ENCODE measurements at regions of chr14 and their contacts with region 1.

Region 1: GRCh38 chr14:106657460-106657859 is 1131.1 kb downstream of the TMEM121 start:
- DNase-seq: peak; percentile 78
- ATAC-seq: peak; percentile 78
- H3K4me3 Mint-ChIP-seq: no peak overlapping the region
- H3K27ac Mint-ChIP-seq: no peak overlapping the region
- H3K4me1 Mint-ChIP-seq: peaks cover 18% of the 10 kb centered on the region
- H3K27me3 Mint-ChIP-seq: no peaks in the 10 kb centered on the region

Region 2: GRCh38 chr14:106109337-106109736 is 548.1 kb before region 1 on chr14:
- CTCF ChIA-PET with region 1: no interaction called
- POLR2A ChIA-PET with region 1: no interaction called
- intact Hi-C with region 1: no loop called
- DNase-seq: no peak
- ATAC-seq: no peak
- H3K4me3 Mint-ChIP-seq: no peak overlapping the region
- H3K27ac Mint-ChIP-seq: no peak overlapping the region
- H3K4me1 Mint-ChIP-seq: no peaks in the 10 kb centered on the region
- H3K27me3 Mint-ChIP-seq: peaks cover 3% of the 10 kb centered on the region

Region 3: DNA sequence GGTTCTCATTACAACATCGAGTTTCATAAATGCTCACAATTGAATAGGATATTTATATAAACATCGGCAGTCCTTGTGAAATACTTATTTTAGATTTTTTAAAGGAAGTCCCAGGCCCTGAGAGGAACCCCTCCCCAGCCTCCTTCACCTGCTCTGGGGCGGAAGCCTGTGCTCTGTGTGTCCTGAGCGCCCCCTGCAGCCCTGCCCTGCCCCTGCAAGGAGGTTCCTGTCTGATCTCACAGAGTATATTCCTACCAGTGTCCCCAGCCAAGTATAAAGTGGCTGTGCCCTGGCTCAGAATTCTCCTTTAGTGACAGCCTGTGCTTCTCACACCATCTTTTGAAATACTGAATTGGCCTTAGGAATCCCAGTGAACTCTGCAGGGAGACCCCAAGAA is 471.6 kb before region 1 on chr14:
- CTCF ChIA-PET with region 1: no interaction called
- POLR2A ChIA-PET with region 1: no interaction called
- intact Hi-C with region 1: no loop called
- DNase-seq: peak; percentile 85
- ATAC-seq: peak; percentile 79
- H3K4me3 Mint-ChIP-seq: no peak overlapping the region
- H3K27ac Mint-ChIP-seq: peak overlapping the region; percentile 19
- H3K4me1 Mint-ChIP-seq: peaks cover 34% of the 10 kb centered on the region
- H3K27me3 Mint-ChIP-seq: no peaks in the 10 kb centered on the region

Region 4: GRCh38 chr14:106681161-106681560 is 23.7 kb after region 1 on chr14:
- CTCF ChIA-PET with region 1: interaction called, 106 read pairs
- POLR2A ChIA-PET with region 1: no interaction called
- intact Hi-C with region 1: no loop called
- DNase-seq: no peak
- ATAC-seq: no peak
- H3K4me3 Mint-ChIP-seq: no peak overlapping the region
- H3K27ac Mint-ChIP-seq: no peak overlapping the region
- H3K4me1 Mint-ChIP-seq: no peaks in the 10 kb centered on the region
- H3K27me3 Mint-ChIP-seq: peaks cover 4% of the 10 kb centered on the region